CD14-positive monocyte (primary cell): ENCODE measurements at regions of chr4 and their contacts with region 1.

Region 1: GRCh38 chr4:113901994-113902787 is 77.3 kb downstream of the ARSJ start:
- DNase-seq: no peak
- H3K4me3 ChIP-seq: no peak overlapping the region
- H3K4me3 Mint-ChIP-seq: no peak overlapping the region
- H3K27ac ChIP-seq: no peak overlapping the region
- H3K27ac Mint-ChIP-seq: no peak overlapping the region
- H3K4me1 ChIP-seq: peaks cover 9 to 13% of the 10 kb centered on the region in 2 donors
- H3K4me1 Mint-ChIP-seq: peaks cover 15% of the 10 kb centered on the region
- H3K27me3 ChIP-seq: no peaks in the 10 kb centered on the region
- H3K27me3 Mint-ChIP-seq: peaks cover 0 to 2% (median 0%) of the 10 kb centered on the region in 3 donors
- CTCF ChIP-seq: no peak

Region 2: DNA sequence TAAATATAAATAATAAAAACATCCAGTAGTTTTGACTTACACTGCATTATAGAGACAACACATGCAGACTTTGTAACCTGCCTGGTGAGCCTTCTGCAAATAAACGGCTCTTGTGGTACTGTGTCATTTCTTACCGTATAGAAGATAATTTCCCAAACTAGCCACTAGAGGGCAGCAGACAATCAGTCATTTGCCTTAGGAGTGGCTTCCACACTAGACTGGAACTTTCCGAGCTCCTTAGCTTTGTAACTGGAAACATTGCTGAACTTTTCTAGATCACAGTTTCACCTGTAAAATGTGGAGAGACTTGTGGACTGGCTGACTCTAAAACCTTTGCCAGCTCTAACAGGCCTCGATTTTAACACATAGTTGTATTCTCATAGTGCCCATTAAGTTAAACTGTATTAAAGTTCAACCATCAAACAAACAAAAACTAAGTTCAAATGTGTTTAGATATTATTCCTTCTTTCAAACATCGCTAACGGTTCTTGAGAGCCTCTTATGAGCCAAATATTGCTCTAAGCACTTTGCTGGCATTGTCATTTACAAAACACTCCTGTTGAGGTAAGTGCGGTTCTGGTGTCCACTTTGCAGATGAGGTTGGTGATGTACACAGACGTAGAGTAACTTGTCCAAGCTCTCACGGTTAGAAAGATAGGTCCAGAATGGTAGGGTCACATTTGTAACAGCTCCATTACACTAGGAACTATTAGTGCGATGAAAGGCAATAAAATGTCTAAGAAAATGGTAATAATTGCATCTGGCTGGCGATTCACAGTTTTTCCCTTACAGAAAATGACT is 507.3 kb before region 1 on chr4:
- intact Hi-C with region 1: loop called in 1 of 2 experiments (anchors 10 kb)
- DNase-seq: peak; percentile 37 to 65 (median 56)
- H3K4me3 ChIP-seq: no peak overlapping the region
- H3K4me3 Mint-ChIP-seq: no peak overlapping the region
- H3K27ac ChIP-seq: no peak overlapping the region
- H3K27ac Mint-ChIP-seq: no peak overlapping the region
- H3K4me1 ChIP-seq: no peaks in the 10 kb centered on the region
- H3K4me1 Mint-ChIP-seq: no peaks in the 10 kb centered on the region
- H3K27me3 ChIP-seq: no peaks in the 10 kb centered on the region
- H3K27me3 Mint-ChIP-seq: peaks cover 0 to 5% (median 2%) of the 10 kb centered on the region in 3 donors
- CTCF ChIP-seq: peak; percentile 86

Region 3: GRCh38 chr4:113555868-113556267 is 346.3 kb before region 1 on chr4:
- intact Hi-C with region 1: loop called in 1 of 2 experiments (anchors 10 kb)
- DNase-seq: peak in 2 of 3 donors; percentile 10 to 19
- H3K4me3 ChIP-seq: no peak overlapping the region
- H3K4me3 Mint-ChIP-seq: no peak overlapping the region
- H3K27ac ChIP-seq: peak overlapping the region in 1 of 2 donors; percentile 4
- H3K27ac Mint-ChIP-seq: no peak overlapping the region
- H3K4me1 ChIP-seq: peaks cover 11 to 13% of the 10 kb centered on the region in 2 donors
- H3K4me1 Mint-ChIP-seq: peaks cover 21% of the 10 kb centered on the region
- H3K27me3 ChIP-seq: no peaks in the 10 kb centered on the region
- H3K27me3 Mint-ChIP-seq: peaks cover 0 to 14% (median 3%) of the 10 kb centered on the region in 3 donors
- CTCF ChIP-seq: no peak

Region 4: DNA sequence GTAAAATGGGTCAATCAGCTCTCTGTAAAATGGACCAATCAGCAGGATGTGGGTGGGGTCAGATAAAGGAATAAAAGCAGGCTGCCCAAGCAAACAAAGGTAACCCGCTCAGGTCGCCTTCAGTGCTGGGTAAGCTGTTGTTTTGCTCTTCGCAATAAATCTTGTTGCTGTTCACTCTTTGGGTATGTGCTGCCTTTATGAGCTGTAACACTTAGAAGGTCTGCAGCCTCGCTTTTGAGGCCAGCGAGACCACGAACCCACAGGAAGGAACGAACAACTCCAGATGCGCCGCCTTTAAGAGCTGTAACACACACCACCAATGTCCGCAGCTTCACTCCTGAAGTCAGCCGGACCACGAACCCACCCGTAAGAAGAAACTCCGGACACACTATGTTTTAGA is 129.2 kb before region 1 on chr4:
- intact Hi-C with region 1: loop called in 1 of 2 experiments (anchors 10 kb)
- DNase-seq: no peak
- H3K4me3 ChIP-seq: peak overlapping the region in 2 of 3 experiments; percentile 17 to 45
- H3K4me3 Mint-ChIP-seq: peak overlapping the region; percentile 35 to 83
- H3K27ac ChIP-seq: no peak overlapping the region
- H3K27ac Mint-ChIP-seq: peak overlapping the region in 3 of 7 donors; percentile 0 to 68 (median 35)
- H3K4me1 ChIP-seq: peaks cover 5 to 6% of the 10 kb centered on the region in 2 donors
- H3K4me1 Mint-ChIP-seq: peaks cover 5% of the 10 kb centered on the region
- H3K27me3 ChIP-seq: peaks cover 0 to 2% of the 10 kb centered on the region in 2 donors
- H3K27me3 Mint-ChIP-seq: peaks cover 2 to 3% (median 2%) of the 10 kb centered on the region in 3 donors
- CTCF ChIP-seq: no peak

Region 5: DNA sequence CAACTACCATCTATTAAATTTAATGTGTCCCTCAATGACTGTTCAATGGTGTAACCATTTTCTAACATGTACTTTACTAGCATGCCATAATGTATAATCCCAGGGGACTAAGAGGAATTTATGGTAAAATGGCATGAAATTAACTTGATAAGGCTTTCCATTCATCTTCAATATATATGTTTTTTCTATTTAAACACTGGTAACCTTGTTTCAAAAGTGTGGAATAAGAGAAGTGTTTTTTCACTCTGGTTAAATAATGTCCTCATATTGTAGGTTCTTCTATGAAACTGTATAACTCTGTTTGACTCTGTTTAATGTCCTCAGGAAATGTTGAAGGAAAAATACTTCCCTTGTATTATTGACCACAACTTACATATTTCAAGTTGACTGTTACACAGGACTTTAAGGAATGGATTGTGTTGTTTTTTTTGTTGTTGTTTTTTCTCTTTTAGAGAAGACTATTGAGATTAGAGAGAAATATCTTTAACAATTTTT is 191.1 kb after region 1 on chr4:
- intact Hi-C with region 1: no loop called
- DNase-seq: no peak
- H3K4me3 ChIP-seq: no peak overlapping the region
- H3K4me3 Mint-ChIP-seq: no peak overlapping the region
- H3K27ac ChIP-seq: no peak overlapping the region
- H3K27ac Mint-ChIP-seq: no peak overlapping the region
- H3K4me1 ChIP-seq: no peaks in the 10 kb centered on the region
- H3K4me1 Mint-ChIP-seq: no peaks in the 10 kb centered on the region
- H3K27me3 ChIP-seq: no peaks in the 10 kb centered on the region
- H3K27me3 Mint-ChIP-seq: peaks cover 0 to 1% (median 0%) of the 10 kb centered on the region in 3 donors
- CTCF ChIP-seq: no peak

Region 6: GRCh38 chr4:114527637-114528036 is 625.4 kb after region 1 on chr4:
- intact Hi-C with region 1: no loop called
- DNase-seq: no peak
- H3K4me3 ChIP-seq: no peak overlapping the region
- H3K4me3 Mint-ChIP-seq: no peak overlapping the region
- H3K27ac ChIP-seq: no peak overlapping the region
- H3K27ac Mint-ChIP-seq: no peak overlapping the region
- H3K4me1 ChIP-seq: no peaks in the 10 kb centered on the region
- H3K4me1 Mint-ChIP-seq: no peaks in the 10 kb centered on the region
- H3K27me3 ChIP-seq: no peaks in the 10 kb centered on the region
- H3K27me3 Mint-ChIP-seq: peaks cover 0 to 2% (median 0%) of the 10 kb centered on the region in 3 donors
- CTCF ChIP-seq: no peak